Right lobe of liver (tissue), 6 donors: ENCODE measurements at regions of chr14 and their contacts with region 1.

Region 1: DNA sequence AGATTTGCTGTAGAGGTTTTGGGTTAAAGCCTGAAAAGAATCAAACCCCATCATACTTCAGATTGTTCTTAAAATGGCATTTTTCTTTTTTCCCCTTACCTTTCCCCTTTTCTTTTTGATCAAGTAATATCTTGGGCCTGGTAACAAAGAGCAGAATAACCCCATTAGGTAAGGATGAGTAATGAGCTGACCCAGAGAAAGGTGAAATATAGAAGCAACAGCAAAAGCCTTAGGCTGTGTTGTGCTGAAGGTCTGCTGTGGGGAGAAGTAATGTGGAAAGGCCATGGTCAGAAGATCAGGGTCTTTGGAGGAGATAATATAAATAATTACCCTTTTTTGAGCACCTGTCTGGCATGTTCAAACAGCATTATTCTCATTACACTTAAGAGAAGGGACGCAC is 42.3 kb downstream of the MIA2 start:
- DNase-seq: no peak
- ATAC-seq: peak; percentile 28 to 80 (median 34)
- H3K4me3 ChIP-seq: no peak overlapping the region
- H3K27ac ChIP-seq: peak overlapping the region in 2 of 3 donors; percentile 21 to 43
- H3K4me1 ChIP-seq: peaks cover 0 to 16% (median 8%) of the 10 kb centered on the region in 4 donors
- H3K27me3 ChIP-seq: no peaks in the 10 kb centered on the region
- CTCF ChIP-seq: no peak
- POLR2A ChIP-seq: no peak

Region 2: DNA sequence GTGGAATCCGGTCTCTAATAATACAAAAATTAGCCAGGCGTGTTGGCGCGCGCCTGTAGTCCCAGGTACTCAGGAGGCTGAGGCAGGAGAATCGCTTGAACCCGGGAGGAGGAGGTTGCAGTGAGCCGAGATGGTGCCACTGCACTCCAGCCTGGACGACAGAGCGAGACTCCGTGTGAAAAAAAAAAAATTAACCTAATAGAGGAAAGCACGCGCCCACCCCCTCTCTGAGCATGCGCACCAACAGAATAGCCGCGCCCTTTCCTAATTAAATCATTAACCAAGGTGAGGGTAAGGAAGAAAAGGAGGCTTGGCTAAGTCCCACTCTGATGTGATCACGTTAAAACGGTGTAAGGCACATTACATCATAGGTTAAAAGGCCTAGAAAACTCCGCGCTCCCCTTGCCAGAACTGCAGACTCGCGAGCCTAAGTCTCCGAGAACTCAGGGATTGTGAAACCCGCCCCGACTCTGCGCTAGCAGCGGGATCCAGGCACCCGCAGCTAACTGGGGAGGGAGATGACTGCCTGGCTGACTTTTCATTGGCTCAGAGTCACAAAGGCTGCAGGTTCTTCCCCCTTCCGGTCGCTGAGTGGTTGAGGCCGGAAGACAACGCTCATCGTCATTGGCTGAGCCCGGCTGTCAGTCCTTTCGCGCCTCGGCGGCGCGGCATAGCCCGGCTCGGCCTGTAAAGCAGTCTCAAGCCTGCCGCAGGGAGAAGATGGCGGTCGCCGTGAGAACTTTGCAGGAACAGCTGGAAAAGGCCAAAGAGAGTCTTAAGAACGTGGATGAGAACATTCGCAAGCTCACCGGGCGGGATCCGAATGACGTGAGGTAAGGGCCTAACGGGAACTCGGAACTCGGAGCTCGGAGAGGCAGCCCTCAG is 101.2 kb before region 1 on chr14 and contains the start of gene PNN:
- intact Hi-C with region 1: loop called in 1 of 2 experiments (anchors 10 kb)
- DNase-seq: peak; percentile 95 to 98 (median 98)
- ATAC-seq: peak; percentile 87 to 95 (median 90)
- H3K4me3 ChIP-seq: peak within 1 kb of the TSS; percentile 69 to 93 (median 82)
- H3K27ac ChIP-seq: peak within 1 kb of the TSS; percentile 92 to 98 (median 94)
- H3K4me1 ChIP-seq: peaks cover 0 to 27% (median 14%) of the 10 kb centered on the region in 4 donors
- H3K27me3 ChIP-seq: no peaks in the 10 kb centered on the region
- CTCF ChIP-seq: no peak
- POLR2A ChIP-seq: peak; percentile 97
- total RNA-seq, gene PNN: 12.2 to 42.0 (median 23.8) TPM